Heart left ventricle (tissue), 16 donors: ENCODE measurements at regions of chr6 and their contacts with region 1.

Region 1: GRCh38 chr6:84774157-84774984 is 10.0 kb upstream of the TBX18 start:
- DNase-seq: peak; percentile 25 to 72 (median 47)
- ATAC-seq: peak; percentile 36 to 86 (median 80)
- H3K4me3 ChIP-seq: peak overlapping the region; percentile 23 to 65 (median 52)
- H3K27ac ChIP-seq: peak overlapping the region; percentile 30 to 80 (median 66)
- H3K4me1 ChIP-seq: peaks cover 0 to 19% (median 2%) of the 10 kb centered on the region in 12 donors
- H3K27me3 ChIP-seq: peaks cover 21 to 95% (median 61%) of the 10 kb centered on the region in 9 donors
- CTCF ChIP-seq: peak; percentile 20 to 62 (median 46)
- POLR2A ChIP-seq: no peak

Region 2: GRCh38 chr6:84422380-84422968 is 351.9 kb before region 1 on chr6:
- intact Hi-C with region 1: loop called in 5 of 10 experiments (anchors 5 to 10 kb)
- DNase-seq: peak; percentile 18 to 69 (median 47)
- ATAC-seq: peak in 3 of 4 donors; percentile 75 to 82 (median 80)
- H3K4me3 ChIP-seq: no peak overlapping the region
- H3K27ac ChIP-seq: no peak overlapping the region
- H3K4me1 ChIP-seq: no peaks in the 10 kb centered on the region
- H3K27me3 ChIP-seq: peaks cover 0 to 2% (median 0%) of the 10 kb centered on the region in 9 donors
- CTCF ChIP-seq: peak in 11 of 12 donors; percentile 17 to 71 (median 49)
- POLR2A ChIP-seq: no peak

Region 3: GRCh38 chr6:84486526-84486925 is 287.8 kb before region 1 on chr6:
- intact Hi-C with region 1: no loop called
- DNase-seq: no peak
- ATAC-seq: no peak
- H3K4me3 ChIP-seq: no peak overlapping the region
- H3K27ac ChIP-seq: no peak overlapping the region
- H3K4me1 ChIP-seq: no peaks in the 10 kb centered on the region
- H3K27me3 ChIP-seq: no peaks in the 10 kb centered on the region
- CTCF ChIP-seq: no peak
- POLR2A ChIP-seq: no peak

Region 4: DNA sequence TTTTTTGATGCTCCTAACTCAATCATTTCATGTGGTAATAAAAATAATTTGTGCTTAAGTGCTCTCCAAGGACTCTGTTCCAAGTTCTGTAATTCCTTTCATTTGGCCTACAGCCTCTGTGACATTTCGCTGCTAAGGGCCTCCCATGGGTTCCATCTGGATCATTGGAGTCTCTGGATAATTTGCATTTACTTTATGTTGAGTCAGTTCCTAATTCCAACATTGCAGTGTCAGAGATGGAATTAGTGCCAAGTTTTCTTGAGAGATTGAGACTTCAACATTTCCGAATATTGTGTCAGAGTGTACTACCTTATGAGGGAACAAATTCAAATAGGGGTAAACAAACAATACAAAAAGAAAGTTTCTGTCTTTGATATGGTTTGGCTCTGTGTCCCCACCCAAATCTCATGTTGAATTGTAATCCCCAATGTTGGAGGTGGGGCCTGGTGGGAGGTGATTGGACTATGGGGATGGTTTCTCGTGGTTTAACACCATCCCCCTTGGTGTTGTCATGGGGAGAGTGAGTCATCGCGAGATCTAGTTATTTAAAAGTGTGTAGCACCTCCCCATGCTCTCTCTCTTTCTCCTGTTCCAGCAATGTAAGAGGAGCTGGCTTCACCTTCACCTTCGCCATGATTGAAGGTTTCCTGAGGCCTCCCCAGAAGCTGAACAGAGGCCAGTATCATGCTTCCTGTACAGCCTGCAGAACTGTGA is 234.1 kb after region 1 on chr6:
- intact Hi-C with region 1: loop called in 1 of 10 experiments (anchors 10 kb)
- DNase-seq: no peak
- ATAC-seq: no peak
- H3K4me3 ChIP-seq: no peak overlapping the region
- H3K27ac ChIP-seq: no peak overlapping the region
- H3K4me1 ChIP-seq: no peaks in the 10 kb centered on the region
- H3K27me3 ChIP-seq: no peaks in the 10 kb centered on the region
- CTCF ChIP-seq: no peak
- POLR2A ChIP-seq: no peak